ENCODE measurements at regions of chrX and their contacts with region 1.

Region 1: GRCh38 chrX:104922206-104922621 is 298.3 kb downstream of the TEX13A start:
- DNase-seq: peak; percentile 67 to 77 (median 71)
- ATAC-seq: peak; percentile 98
- H3K4me3 ChIP-seq: no peak overlapping the region
- H3K27ac ChIP-seq: no peak overlapping the region
- H3K4me1 ChIP-seq: no peaks in the 10 kb centered on the region
- H3K27me3 ChIP-seq: no peaks in the 10 kb centered on the region
- CTCF ChIP-seq: peak; percentile 95 to 99 (median 98)
- EP300 ChIP-seq: no peak
- POLR2A ChIP-seq: no peak
- RAD21 ChIP-seq: peak in 1 of 2 experiments; percentile 72; a peak in 2 of 4 replicates

Region 2: DNA sequence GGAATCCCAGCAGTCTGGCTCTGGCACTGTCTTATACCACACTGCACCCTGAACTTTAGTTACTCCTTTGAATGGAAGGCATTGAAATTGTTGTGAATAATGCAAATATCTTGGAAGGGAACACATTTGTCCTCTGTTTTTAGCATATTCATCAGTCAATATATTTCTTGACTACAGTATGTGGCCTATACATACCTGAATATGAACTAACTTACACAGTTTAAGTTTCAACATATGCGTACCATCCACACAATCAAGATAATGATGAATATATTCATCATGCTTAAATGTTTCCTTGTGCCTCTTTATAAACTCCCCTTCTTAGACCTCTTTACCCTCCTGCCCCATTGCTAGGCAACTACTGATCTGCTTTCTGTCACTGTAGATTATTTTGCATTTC is 521.8 kb before region 1 on chrX:
- CTCF ChIA-PET with region 1: no interaction called
- POLR2A ChIA-PET with region 1: no interaction called
- in situ Hi-C with region 1: no loop called
- intact Hi-C with region 1: no loop called
- DNase-seq: no peak
- ATAC-seq: no peak
- H3K4me3 ChIP-seq: no peak overlapping the region
- H3K27ac ChIP-seq: no peak overlapping the region
- H3K4me1 ChIP-seq: no peaks in the 10 kb centered on the region
- H3K27me3 ChIP-seq: no peaks in the 10 kb centered on the region
- CTCF ChIP-seq: no peak
- EP300 ChIP-seq: no peak
- POLR2A ChIP-seq: no peak
- RAD21 ChIP-seq: no peak

Region 3: DNA sequence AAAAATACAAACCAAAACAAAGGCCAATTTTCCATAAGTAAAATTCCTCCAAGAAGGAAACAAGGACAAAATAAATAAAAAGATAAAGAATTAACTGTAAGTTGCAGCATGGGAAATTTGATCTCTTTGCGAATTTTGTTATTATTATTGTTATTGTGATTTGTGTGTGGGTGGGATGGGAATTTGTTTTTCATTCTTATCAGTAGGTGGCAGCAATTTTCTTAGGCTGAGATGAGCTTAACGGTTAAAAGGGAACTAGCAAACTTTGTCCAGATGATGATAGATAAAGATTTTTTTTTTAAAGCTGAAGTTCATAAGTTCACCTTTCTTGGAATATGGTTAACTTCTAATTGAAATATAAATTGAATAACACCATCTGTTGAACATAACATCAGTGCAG is 439.5 kb before region 1 on chrX:
- CTCF ChIA-PET with region 1: no interaction called
- POLR2A ChIA-PET with region 1: no interaction called
- in situ Hi-C with region 1: no loop called
- intact Hi-C with region 1: loop called (anchors 5 kb)
- DNase-seq: peak in 2 of 4 experiments; percentile 5 to 8
- ATAC-seq: no peak
- H3K4me3 ChIP-seq: no peak overlapping the region
- H3K27ac ChIP-seq: no peak overlapping the region
- H3K4me1 ChIP-seq: no peaks in the 10 kb centered on the region
- H3K27me3 ChIP-seq: no peaks in the 10 kb centered on the region
- CTCF ChIP-seq: peak in 1 of 3 experiments; percentile 25; a peak in 1 of 6 replicates
- EP300 ChIP-seq: no peak
- POLR2A ChIP-seq: no peak
- RAD21 ChIP-seq: no peak

Region 4: GRCh38 chrX:104565791-104566680 is 356.2 kb before region 1 on chrX and contains the start of gene IL1RAPL2:
- CTCF ChIA-PET with region 1: no interaction called
- POLR2A ChIA-PET with region 1: no interaction called
- in situ Hi-C with region 1: no loop called
- intact Hi-C with region 1: loop called (anchors 5 kb)
- DNase-seq: peak; percentile 23 to 49 (median 36)
- ATAC-seq: peak; percentile 93
- H3K4me3 ChIP-seq: no peak within 1 kb of the TSS
- H3K27ac ChIP-seq: no peak within 1 kb of the TSS
- H3K4me1 ChIP-seq: no peaks in the 10 kb centered on the region
- H3K27me3 ChIP-seq: peaks cover 0 to 27% of the 10 kb centered on the region in 2 experiments; a peak in 2 of 5 replicates
- CTCF ChIP-seq: peak; percentile 51 to 65 (median 62)
- EP300 ChIP-seq: no peak
- POLR2A ChIP-seq: no peak
- RAD21 ChIP-seq: no peak; a peak in 1 of 4 replicates
- polyA plus RNA-seq, gene IL1RAPL2: not detected